Activated CD4-positive, alpha-beta T cell treated with anti-CD3 and anti-CD28 coated beads for 36 hours (primary cell): ENCODE measurements at regions of chr19 and their contacts with region 1.

Region 1: GRCh38 chr19:40603389-40604135 is 2.4 kb downstream of the LTBP4 start:
- DNase-seq: peak; percentile 99
- ATAC-seq: peak; percentile 80
- H3K4me3 Mint-ChIP-seq: peak overlapping the region; percentile 52
- H3K27ac Mint-ChIP-seq: no peak overlapping the region
- H3K4me1 Mint-ChIP-seq: peaks cover 66% of the 10 kb centered on the region
- H3K27me3 Mint-ChIP-seq: peaks cover 22% of the 10 kb centered on the region

Region 2: GRCh38 chr19:40348125-40348913 is 255.2 kb before region 1 on chr19 and contains the starts of genes C19orf47 and PLD3:
- CTCF ChIA-PET with region 1: no interaction called
- POLR2A ChIA-PET with region 1: no interaction called
- intact Hi-C with region 1: loop called in 1 of 2 experiments (anchors 2 kb)
- DNase-seq: peak; percentile 100
- ATAC-seq: peak; percentile 97
- H3K4me3 Mint-ChIP-seq: peak within 1 kb of the TSS; percentile 96
- H3K27ac Mint-ChIP-seq: peak within 1 kb of the TSS; percentile 91
- H3K4me1 Mint-ChIP-seq: peaks cover 26% of the 10 kb centered on the region
- H3K27me3 Mint-ChIP-seq: no peaks in the 10 kb centered on the region
- total RNA-seq, gene C19orf47: 15.8 to 17.7 TPM
- total RNA-seq, gene PLD3: 57.8 to 69.1 TPM

Region 3: DNA sequence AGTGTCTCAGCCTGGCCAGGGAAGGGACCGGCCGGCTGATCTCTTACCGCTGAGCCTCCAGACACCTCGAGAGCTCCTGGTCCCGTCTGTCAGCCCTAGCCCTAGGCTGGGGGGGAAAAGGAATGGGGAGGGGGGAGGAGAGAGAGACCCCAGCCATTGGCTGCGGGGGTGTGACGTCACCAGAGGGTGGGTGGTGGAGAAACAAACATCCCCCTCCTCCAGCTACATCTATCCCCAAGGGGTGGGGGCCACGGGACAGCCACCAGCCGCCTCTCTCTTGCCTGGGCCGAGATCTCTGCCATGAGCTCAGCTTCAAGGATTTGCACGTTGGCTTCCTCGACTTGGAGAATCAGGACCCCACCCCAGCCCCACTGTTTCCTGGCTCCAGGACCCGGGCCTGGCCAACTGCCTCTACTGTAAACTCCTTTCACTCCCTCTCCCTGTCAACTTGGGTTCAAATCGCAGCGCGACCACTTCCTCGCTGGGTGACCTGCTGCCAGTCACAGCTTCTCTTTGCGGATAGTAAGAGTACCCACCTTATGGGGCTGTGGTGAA is 190.2 kb before region 1 on chr19 and contains the start of gene PRX:
- CTCF ChIA-PET with region 1: no interaction called
- POLR2A ChIA-PET with region 1: no interaction called
- intact Hi-C with region 1: no loop called
- DNase-seq: no peak
- ATAC-seq: no peak
- H3K4me3 Mint-ChIP-seq: no peak within 1 kb of the TSS
- H3K27ac Mint-ChIP-seq: no peak within 1 kb of the TSS
- H3K4me1 Mint-ChIP-seq: peaks cover 10% of the 10 kb centered on the region
- H3K27me3 Mint-ChIP-seq: peaks cover 2% of the 10 kb centered on the region
- total RNA-seq, gene PRX: 1.0 to 1.4 TPM

Region 4: DNA sequence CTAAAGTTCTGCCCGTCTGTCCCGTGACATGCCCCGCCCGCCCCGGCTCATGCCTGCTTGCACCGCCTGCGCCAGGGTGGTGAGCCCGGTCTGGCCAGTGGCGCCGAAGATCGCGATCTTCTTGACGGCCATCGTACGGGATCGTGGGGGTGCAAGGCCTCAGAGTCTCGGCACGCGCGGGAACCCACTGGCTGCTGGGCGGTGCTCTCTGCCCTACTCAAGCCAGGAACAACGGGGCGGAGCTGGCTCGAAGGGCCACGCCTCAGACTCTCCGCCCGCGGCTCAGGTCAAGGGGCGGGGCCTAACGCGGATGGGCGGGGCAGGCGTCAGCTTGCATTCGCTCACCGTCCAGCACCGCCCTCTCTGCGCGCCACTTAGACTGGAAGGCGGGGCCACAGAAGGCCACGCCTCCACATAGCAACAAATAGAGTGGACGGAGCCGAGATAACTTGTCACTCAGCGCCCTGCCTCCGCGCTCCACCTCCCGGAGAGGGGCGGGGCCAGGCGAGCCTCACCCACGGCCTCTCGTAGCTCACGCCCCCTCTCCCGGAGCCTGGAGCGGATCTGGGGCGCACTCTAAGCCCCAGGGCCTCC is 137.9 kb before region 1 on chr19 and contains the start of gene BLVRB:
- CTCF ChIA-PET with region 1: interaction called, 6 read pairs
- POLR2A ChIA-PET with region 1: no interaction called
- intact Hi-C with region 1: loop called in 1 of 2 experiments (anchors 2 kb)
- DNase-seq: peak; percentile 100
- ATAC-seq: peak; percentile 84
- H3K4me3 Mint-ChIP-seq: peak within 1 kb of the TSS; percentile 77
- H3K27ac Mint-ChIP-seq: peak within 1 kb of the TSS; percentile 87
- H3K4me1 Mint-ChIP-seq: peaks cover 30% of the 10 kb centered on the region
- H3K27me3 Mint-ChIP-seq: peaks cover 11% of the 10 kb centered on the region
- total RNA-seq, gene BLVRB: 34.1 to 35.6 TPM

Region 5: GRCh38 chr19:40614622-40615411 is 11.3 kb after region 1 on chr19:
- CTCF ChIA-PET with region 1: interaction called, 18 read pairs
- POLR2A ChIA-PET with region 1: interaction called, 15 read pairs
- intact Hi-C with region 1: loop called (anchors 1 kb)
- DNase-seq: peak; percentile 98
- ATAC-seq: peak; percentile 55
- H3K4me3 Mint-ChIP-seq: peak overlapping the region; percentile 99
- H3K27ac Mint-ChIP-seq: peak overlapping the region; percentile 100
- H3K4me1 Mint-ChIP-seq: peaks cover 58% of the 10 kb centered on the region
- H3K27me3 Mint-ChIP-seq: no peaks in the 10 kb centered on the region

Region 6: DNA sequence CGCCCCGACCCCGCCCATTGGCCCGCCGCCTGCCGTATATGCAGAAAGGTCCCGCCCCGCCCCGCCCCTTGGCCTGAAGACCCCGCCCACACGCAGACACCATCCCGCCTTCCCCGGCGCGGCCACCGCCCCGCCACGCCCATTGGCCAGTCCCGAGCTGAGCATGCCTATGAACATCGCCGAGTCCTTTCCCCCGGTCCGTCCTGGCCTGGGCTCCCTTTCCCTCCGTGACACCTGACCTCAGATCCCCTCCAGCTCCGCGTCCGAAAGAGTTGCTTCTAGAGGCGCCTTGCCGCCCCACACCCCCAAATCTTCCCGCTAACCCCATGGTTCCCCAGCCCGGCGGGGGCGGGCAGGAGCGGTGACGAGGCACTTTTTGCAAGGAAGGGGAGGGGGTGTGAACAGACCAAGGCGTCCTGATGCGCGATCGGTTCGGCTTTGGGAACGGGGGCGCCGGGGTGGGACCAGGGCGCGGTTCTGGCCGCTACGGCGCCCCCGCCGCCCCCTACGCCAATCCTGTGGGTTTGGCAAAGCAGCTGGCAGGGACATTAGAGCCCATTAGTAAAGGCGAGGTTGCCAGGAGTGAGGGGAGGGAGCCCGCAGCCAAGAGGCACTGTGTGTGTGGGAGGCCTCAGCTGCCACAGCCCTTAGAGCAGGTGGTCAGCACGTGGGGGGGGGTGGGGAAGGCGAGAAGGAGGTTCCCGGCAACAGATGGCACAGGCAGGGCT is 87.3 kb after region 1 on chr19:
- CTCF ChIA-PET with region 1: no interaction called
- POLR2A ChIA-PET with region 1: no interaction called
- intact Hi-C with region 1: loop called in 1 of 2 experiments (anchors 2 kb)
- DNase-seq: peak; percentile 97
- ATAC-seq: peak; percentile 85
- H3K4me3 Mint-ChIP-seq: peak overlapping the region; percentile 80
- H3K27ac Mint-ChIP-seq: peak overlapping the region; percentile 87
- H3K4me1 Mint-ChIP-seq: peaks cover 5% of the 10 kb centered on the region
- H3K27me3 Mint-ChIP-seq: no peaks in the 10 kb centered on the region

Region 7: GRCh38 chr19:40872209-40872608 is 268.6 kb after region 1 on chr19:
- CTCF ChIA-PET with region 1: no interaction called
- POLR2A ChIA-PET with region 1: no interaction called
- intact Hi-C with region 1: no loop called
- DNase-seq: no peak
- ATAC-seq: no peak
- H3K4me3 Mint-ChIP-seq: no peak overlapping the region
- H3K27ac Mint-ChIP-seq: no peak overlapping the region
- H3K4me1 Mint-ChIP-seq: peaks cover 9% of the 10 kb centered on the region
- H3K27me3 Mint-ChIP-seq: peaks cover 14% of the 10 kb centered on the region